ENCODE measurements at regions of chr3 and their contacts with region 1.

Region 1: DNA sequence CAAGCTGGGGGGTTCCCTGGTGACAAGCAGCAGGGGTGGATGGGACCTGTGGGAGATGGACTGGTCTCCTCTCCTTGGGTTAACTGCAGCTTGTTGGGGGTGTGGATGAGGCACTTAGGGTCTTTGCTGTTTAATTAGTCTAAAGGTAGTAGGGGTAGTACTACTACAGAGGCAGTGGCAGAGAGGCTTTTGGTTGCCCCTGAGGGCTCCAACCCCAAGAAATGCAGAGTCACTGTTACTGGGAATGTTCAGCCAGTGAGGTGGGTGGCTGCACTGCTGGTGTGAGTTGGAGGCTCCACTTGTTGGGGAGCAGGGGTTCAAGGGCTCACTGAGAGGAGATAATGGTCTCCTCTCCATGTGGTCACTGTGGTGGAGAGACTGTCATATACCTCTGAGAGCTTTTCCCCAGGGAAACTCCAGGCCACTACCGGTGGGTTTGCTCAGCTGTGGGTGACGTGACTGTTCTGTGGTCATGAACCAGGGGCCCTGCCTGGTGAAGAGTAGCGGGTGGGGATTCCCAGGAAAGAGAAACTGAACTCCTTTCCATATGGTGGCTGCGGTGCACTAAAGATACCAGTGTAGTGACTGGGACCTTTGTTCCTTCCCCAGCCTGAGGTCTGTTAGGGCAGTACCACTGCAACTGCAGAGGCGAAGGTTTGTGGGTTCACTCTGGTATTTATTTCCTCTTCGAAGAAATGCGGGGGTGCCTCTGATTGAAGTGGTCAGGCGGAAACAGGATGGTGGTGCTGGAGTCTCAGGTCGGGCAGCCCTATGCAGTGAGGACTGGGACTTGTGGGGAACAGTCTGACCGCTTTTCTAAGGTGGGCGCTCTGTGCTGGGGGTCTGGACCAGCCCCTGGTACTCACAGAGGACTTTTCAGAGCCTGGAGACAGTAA is 68.9 kb upstream of the TNFSF10 start:
- DNase-seq: no peak
- ATAC-seq: no peak

Region 2: DNA sequence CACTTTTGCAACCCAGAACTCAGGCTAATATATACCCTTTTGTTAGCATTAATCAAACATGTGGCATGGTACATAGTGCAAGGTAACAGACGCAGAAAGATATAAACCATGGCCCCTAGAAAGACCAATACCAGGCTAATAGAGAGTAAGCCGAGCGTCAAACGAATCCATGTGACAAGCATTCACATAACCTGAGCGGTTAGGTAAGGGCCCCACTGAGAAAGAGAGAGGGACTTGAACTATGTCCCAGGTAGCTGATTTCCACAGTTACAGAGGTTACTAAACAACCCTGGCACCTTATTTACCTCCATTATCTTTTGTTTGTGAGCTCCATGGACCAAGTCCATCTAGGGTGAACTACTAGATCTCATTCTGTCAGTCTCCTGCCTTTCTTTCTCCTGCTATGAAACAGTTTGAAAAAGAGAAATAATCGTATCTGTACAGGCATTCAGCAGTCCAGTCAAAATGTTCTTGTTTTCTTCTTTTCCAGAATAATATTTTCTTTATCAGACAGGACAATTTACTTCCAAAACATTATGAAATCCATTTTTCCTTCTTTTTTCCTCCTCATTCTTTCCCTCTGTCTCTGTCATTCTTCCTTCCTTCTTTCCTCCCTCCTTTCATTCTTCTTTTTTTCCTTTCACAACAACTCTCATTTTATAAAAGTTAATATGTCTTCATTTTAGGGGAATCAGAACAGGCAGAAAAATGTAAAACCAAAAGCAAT is 38.4 kb before region 1 on chr3:
- intact Hi-C with region 1: loop called (anchors 2 kb)
- DNase-seq: no peak
- ATAC-seq: no peak